Spleen (tissue), 13 donors: ENCODE measurements at regions of chr2 and their contacts with region 1.

Region 1: DNA sequence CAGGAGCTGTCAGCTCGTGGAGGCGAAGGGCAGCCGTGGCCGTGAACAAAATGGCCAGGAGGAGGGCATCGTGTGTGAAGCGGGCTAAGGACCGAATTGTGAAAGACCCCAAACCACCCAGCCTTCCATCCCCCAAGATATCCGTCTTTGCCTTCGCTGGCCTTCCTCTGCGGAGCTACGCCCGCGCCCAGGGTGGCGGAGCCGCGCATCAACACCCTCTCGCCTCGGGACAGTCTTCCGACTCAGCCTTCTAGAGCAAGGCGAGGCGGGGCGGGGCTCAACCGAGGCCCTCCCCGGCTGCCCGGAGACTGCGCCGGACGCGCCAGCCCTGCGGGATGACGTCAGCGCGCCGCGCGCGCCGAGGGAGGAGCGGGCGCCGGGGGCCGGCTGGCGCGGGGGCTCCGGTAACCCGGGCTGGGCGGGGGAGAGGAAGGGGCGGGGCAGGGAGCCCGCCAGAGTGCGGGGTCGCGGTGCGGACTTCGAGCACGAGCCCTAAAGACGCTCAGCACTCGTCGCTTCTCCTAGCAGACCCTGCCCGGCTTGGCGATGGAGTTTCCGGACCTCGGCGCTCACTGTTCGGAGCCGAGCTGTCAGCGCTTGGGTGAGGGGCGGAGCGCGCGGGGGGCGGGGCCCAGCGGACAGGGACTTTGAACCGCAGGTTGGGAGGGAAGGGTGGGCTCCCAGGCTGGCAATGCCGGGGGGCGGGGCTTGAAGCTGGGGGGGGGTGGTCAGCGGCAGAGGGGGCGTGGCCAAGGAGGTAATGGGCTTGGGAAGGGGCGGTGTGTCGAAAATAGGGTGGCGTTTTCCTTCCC is at the start of gene ZFAND2B:
- DNase-seq: peak; percentile 99
- H3K4me3 ChIP-seq: peak within 1 kb of the TSS; percentile 51 to 84 (median 60)
- H3K27ac ChIP-seq: peak within 1 kb of the TSS; percentile 93 to 98 (median 97)
- H3K4me1 ChIP-seq: peaks cover 7 to 57% (median 35%) of the 10 kb centered on the region in 6 donors
- H3K27me3 ChIP-seq: no peaks in the 10 kb centered on the region
- CTCF ChIP-seq: peak in 6 of 11 experiments; percentile 23 to 61 (median 42)
- POLR2A ChIP-seq: peak; percentile 30 to 92 (median 65)
- total RNA-seq, gene ZFAND2B: 46.3 to 77.7 (median 49.8) TPM

Region 2: GRCh38 chr2:219171231-219171651 is 35.4 kb before region 1 on chr2:
- intact Hi-C with region 1: loop called (anchors 5 kb)
- DNase-seq: no peak
- H3K4me3 ChIP-seq: no peak overlapping the region
- H3K27ac ChIP-seq: peak overlapping the region; percentile 11 to 74 (median 54)
- H3K4me1 ChIP-seq: peaks cover 19 to 69% (median 34%) of the 10 kb centered on the region in 6 donors
- H3K27me3 ChIP-seq: no peaks in the 10 kb centered on the region
- CTCF ChIP-seq: peak in 10 of 11 experiments; percentile 28 to 83 (median 64)
- POLR2A ChIP-seq: no peak